Heart right ventricle (tissue), 16 donors: ENCODE measurements at regions of chr5 and their contacts with region 1.

Region 1: DNA sequence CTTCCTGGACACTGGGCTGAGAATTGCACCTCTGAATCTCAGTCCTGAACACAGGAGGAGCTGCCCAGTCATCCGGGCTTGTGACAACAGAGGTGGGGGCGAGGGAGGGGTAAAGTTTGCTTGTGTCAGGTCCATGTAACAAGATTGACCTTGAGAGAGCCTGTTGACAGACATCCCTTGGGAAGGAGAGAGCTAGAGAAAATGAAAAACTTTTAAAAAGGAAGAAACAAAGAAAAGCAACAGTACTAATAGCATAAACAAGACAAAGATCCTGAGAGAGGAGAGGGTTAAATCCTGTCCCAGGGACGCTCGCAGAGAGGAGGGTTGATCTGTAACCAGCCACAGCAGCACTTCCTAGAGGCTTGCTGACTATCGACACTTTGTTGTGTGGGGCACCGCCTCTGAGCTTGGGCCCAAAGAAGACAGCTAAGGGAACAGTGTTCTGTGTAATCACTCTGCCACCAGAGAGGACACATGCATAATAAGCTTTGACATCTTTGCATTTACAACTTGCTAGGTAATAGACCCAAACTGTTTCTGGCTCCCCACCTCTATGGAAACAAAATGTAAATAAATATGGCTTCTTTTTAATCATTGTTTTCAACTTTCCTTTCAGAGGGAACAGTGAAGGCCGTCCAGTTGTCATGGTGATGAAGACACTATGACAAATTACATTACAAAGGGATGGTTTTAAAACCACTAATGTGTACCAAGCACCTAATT is 363.7 kb downstream of the CSNK1G3 start:
- DNase-seq: peak; percentile 15 to 24
- ATAC-seq: peak; percentile 67 to 90 (median 76)
- H3K4me3 ChIP-seq: peak overlapping the region in 2 of 10 donors; percentile 4 to 28
- H3K27ac ChIP-seq: peak overlapping the region in 9 of 10 donors; percentile 28 to 75 (median 42)
- H3K4me1 ChIP-seq: peaks cover 5 to 52% (median 31%) of the 10 kb centered on the region in 9 donors
- H3K27me3 ChIP-seq: no peaks in the 10 kb centered on the region
- CTCF ChIP-seq: no peak

Region 2: GRCh38 chr5:123752552-123753179 is 123.1 kb before region 1 on chr5:
- intact Hi-C with region 1: loop called in 1 of 10 experiments (anchors 10 kb)
- DNase-seq: peak in 1 of 2 donors; percentile 11
- ATAC-seq: peak in 7 of 8 donors; percentile 43 to 90 (median 73)
- H3K4me3 ChIP-seq: no peak overlapping the region
- H3K27ac ChIP-seq: peak overlapping the region in 6 of 10 donors; percentile 16 to 64 (median 48)
- H3K4me1 ChIP-seq: peaks cover 0 to 36% (median 29%) of the 10 kb centered on the region in 9 donors
- H3K27me3 ChIP-seq: no peaks in the 10 kb centered on the region
- CTCF ChIP-seq: no peak

Region 3: DNA sequence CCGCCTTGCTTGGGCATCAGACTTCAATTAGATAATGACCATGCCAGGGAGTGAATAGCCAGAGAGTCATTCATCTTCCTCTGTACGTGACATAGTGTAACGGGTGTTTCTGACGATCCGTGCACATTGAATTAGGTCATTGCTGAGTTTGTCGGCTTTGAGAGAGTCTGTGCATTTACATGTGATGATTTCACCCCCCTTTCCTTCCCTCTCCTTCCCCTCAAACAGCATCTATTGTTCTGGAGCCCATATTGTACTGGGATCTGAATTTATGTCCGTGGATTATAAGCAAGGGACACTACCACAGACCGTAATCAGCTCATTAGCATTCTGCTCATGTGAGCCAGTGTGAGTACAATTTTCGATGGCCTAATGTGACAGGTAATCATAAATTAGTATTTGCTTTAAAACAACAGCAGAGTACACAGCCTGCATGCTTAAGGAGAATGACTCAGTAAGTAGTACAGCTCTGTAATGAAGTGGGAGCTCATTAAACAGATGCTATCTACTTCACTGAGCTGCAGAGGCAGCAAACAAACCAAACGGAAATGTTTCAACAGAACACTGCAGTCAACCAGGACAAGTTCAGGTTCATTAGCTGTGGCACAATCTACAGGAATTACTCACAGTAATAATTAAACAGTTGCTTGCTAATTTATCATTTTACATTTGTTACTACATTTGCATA is 61.6 kb before region 1 on chr5:
- intact Hi-C with region 1: loop called in 1 of 10 experiments (anchors 5 kb)
- DNase-seq: no peak
- ATAC-seq: peak; percentile 32 to 78 (median 73)
- H3K4me3 ChIP-seq: peak overlapping the region in 3 of 10 donors; percentile 0 to 20 (median 7)
- H3K27ac ChIP-seq: peak overlapping the region in 9 of 10 donors; percentile 6 to 76 (median 57)
- H3K4me1 ChIP-seq: peaks cover 6 to 54% (median 35%) of the 10 kb centered on the region in 9 donors
- H3K27me3 ChIP-seq: no peaks in the 10 kb centered on the region
- CTCF ChIP-seq: no peak